Caco-2 (cell line): ENCODE measurements at regions of chr20 and their contacts with region 1.

Region 1: GRCh38 chr20:54680872-54681619 is 205.7 kb downstream of the DOK5 start:
- DNase-seq: peak in 1 of 2 experiments; percentile 72
- H3K4me3 ChIP-seq: no peak overlapping the region
- H3K4me3 Mint-ChIP-seq: no peak overlapping the region
- H3K27ac Mint-ChIP-seq: no peak overlapping the region
- H3K4me1 ChIP-seq: no peaks in the 10 kb centered on the region
- H3K4me1 Mint-ChIP-seq: no peaks in the 10 kb centered on the region
- H3K27me3 ChIP-seq: no peaks in the 10 kb centered on the region; the same call in 1 of the 2 replicates
- H3K27me3 Mint-ChIP-seq: peaks cover 27% of the 10 kb centered on the region
- CTCF ChIP-seq: peak; percentile 88 to 95

Region 2: GRCh38 chr20:54716259-54716658 is 35.2 kb after region 1 on chr20:
- CTCF ChIA-PET with region 1: no interaction called
- POLR2A ChIA-PET with region 1: no interaction called
- intact Hi-C with region 1: no loop called
- DNase-seq: no peak
- H3K4me3 ChIP-seq: no peak overlapping the region
- H3K4me3 Mint-ChIP-seq: no peak overlapping the region
- H3K27ac Mint-ChIP-seq: no peak overlapping the region
- H3K4me1 ChIP-seq: no peaks in the 10 kb centered on the region
- H3K4me1 Mint-ChIP-seq: no peaks in the 10 kb centered on the region
- H3K27me3 ChIP-seq: no peaks in the 10 kb centered on the region
- H3K27me3 Mint-ChIP-seq: peaks cover 4% of the 10 kb centered on the region
- CTCF ChIP-seq: no peak

Region 3: DNA sequence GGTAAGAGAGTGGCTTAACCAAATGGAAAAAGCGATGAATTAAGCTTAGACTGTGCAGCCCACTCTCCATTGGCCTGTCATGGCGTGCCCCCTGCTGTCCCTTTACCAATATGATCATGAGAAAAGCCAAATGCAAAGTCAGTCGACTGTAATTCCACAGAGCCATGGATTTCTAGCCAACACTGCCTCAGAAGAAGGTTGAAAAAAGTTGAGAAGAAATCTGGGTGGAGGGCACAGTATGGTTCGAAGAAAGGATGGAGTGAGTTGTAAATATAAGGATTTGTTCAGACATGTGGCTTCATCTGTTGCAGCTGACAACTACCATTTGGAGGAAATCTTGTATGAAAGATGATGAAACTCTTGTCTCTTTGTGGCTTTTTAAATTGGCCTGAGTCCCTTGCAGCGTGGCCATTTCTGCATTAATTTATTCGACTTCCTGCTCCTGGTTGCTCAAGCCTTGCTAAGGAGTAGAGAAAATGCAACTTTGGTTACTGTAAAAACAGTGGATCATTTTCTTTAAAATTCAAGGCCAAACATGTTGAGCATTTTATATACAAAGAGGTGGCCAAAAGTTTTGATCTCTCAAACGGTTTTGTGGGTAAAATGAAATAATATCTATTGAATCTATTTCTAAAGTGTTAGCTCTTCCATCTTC is 45.8 kb after region 1 on chr20:
- CTCF ChIA-PET with region 1: interaction called, 6 read pairs
- POLR2A ChIA-PET with region 1: no interaction called
- intact Hi-C with region 1: loop called (anchors 1 kb)
- DNase-seq: peak in 1 of 2 experiments; percentile 55
- H3K4me3 ChIP-seq: no peak overlapping the region
- H3K4me3 Mint-ChIP-seq: no peak overlapping the region
- H3K27ac Mint-ChIP-seq: no peak overlapping the region
- H3K4me1 ChIP-seq: no peaks in the 10 kb centered on the region
- H3K4me1 Mint-ChIP-seq: no peaks in the 10 kb centered on the region
- H3K27me3 ChIP-seq: no peaks in the 10 kb centered on the region
- H3K27me3 Mint-ChIP-seq: peaks cover 19% of the 10 kb centered on the region
- CTCF ChIP-seq: peak; percentile 52 to 67

Region 4: DNA sequence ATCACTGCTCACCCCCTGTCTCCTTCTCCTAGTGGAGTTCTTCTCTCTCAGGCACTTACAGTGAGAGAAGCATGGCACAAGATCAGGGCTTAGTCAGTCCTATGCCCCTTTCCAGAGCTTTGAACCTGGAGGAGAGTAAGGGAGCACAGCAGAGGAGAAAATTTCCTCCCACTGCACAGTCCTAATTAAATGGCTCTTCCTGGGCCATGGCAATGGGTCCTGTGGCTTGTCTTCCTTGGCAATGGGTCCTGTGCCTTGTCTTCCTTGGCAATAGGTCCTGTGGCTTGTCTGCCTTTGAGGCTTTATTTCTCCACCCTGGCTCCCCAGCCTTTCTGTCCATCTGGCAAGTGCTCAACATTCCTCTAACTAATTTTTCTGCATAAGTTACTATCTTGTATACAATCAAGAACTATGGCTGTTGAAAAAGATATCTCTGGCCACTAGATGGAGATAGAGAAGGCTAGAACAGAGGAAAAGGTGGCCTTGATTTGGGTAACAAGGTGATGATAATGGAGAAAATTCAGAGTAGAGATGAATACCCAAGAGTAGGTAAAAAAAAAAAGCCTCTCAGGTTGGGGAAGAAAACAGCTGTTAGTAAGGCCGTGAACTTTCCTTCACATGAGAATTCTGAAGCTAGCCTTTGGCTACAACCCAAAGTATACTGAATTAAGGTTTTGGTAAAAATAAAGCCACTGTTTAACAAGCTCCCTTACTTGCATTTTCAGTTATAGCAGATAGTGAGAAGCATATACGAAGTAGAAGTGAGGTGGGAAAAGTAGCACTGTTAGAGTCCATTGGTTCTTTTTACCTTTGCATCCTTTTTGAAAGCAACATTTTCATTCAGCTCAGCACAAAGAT is 299.3 kb after region 1 on chr20:
- CTCF ChIA-PET with region 1: no interaction called
- POLR2A ChIA-PET with region 1: no interaction called
- intact Hi-C with region 1: loop called (anchors 2 kb)
- DNase-seq: peak in 1 of 2 experiments; percentile 53
- H3K4me3 ChIP-seq: no peak overlapping the region
- H3K4me3 Mint-ChIP-seq: no peak overlapping the region
- H3K27ac Mint-ChIP-seq: no peak overlapping the region
- H3K4me1 ChIP-seq: no peaks in the 10 kb centered on the region
- H3K4me1 Mint-ChIP-seq: no peaks in the 10 kb centered on the region
- H3K27me3 ChIP-seq: no peaks in the 10 kb centered on the region
- H3K27me3 Mint-ChIP-seq: peaks cover 6% of the 10 kb centered on the region
- CTCF ChIP-seq: peak; percentile 64 to 66

Region 5: DNA sequence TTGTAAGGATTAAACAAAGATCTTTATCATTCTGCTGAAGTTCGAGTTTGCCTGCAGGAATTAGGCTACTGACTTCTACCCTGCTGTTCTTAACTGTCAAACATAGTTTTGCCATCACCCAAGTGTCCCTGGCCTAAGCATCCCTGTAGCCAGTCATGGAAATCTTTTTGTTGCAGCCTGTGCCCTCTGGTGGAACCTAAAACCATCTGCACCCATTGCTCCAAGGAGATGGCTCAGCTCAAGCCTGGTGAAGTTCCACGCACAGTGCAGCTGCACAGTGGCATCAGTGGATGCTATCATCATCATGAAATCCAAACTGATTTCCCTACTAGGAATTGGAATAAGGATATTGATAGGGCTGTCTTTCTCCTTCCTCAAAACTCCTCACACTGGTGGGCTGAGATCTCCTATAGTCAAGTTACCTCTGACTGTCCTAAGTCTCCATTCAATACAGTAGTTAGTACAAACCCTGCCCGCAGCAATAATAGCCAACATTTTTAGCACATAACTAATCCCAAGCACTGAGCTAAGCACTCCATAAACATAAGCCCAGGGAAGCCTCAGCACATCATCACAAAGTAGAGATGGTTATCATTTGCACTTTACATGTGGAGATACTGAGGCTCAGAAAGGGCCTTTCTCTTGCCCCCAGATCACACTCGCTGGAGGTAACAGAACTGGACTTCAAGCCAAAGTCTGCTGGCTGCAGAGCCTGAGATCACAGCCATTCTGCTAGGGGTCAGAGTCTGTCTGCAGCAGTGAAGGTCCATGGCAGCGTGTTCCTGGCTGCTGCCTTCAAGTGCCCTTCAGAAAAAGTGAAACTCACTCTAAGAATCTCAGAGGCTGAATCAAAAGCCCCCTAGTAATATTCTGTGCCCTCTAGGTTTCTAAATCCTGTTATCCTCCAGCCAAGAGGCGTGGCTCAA is 1490.3 kb after region 1 on chr20:
- CTCF ChIA-PET with region 1: no interaction called
- POLR2A ChIA-PET with region 1: no interaction called
- intact Hi-C with region 1: loop called (anchors 2 kb)
- DNase-seq: peak in 1 of 2 experiments; percentile 24
- H3K4me3 ChIP-seq: no peak overlapping the region
- H3K4me3 Mint-ChIP-seq: no peak overlapping the region
- H3K27ac Mint-ChIP-seq: no peak overlapping the region
- H3K4me1 ChIP-seq: no peaks in the 10 kb centered on the region
- H3K4me1 Mint-ChIP-seq: no peaks in the 10 kb centered on the region
- H3K27me3 ChIP-seq: 0 out of 2 replicates have a peak, but pooled peaks cover 2% of the 10 kb centered on the region
- H3K27me3 Mint-ChIP-seq: peaks cover 10% of the 10 kb centered on the region
- CTCF ChIP-seq: peak; percentile 47 to 58